Natural killer cell (primary cell): ENCODE measurements at regions of chr6 and their contacts with region 1.

Region 1: GRCh38 chr6:56359201-56359899 is 112.0 kb upstream of the COL21A1 start:
- DNase-seq: peak; percentile 18 to 73
- ATAC-seq: peak; percentile 71 to 85 (median 84)
- H3K4me3 ChIP-seq: no peak overlapping the region
- H3K4me3 Mint-ChIP-seq: no peak overlapping the region
- H3K27ac ChIP-seq: no peak overlapping the region
- H3K27ac Mint-ChIP-seq: no peak overlapping the region
- H3K4me1 ChIP-seq: no peaks in the 10 kb centered on the region
- H3K4me1 Mint-ChIP-seq: no peaks in the 10 kb centered on the region
- H3K27me3 ChIP-seq: no peaks in the 10 kb centered on the region
- H3K27me3 Mint-ChIP-seq: no peaks in the 10 kb centered on the region
- CTCF ChIP-seq: peak; percentile 80

Region 2: GRCh38 chr6:56570413-56571359 is 211.3 kb after region 1 on chr6:
- intact Hi-C with region 1: loop called (anchors 1 kb)
- DNase-seq: peak in 1 of 2 donors; percentile 33
- ATAC-seq: peak; percentile 24 to 49 (median 48)
- H3K4me3 ChIP-seq: no peak overlapping the region
- H3K4me3 Mint-ChIP-seq: no peak overlapping the region
- H3K27ac ChIP-seq: no peak overlapping the region
- H3K27ac Mint-ChIP-seq: no peak overlapping the region
- H3K4me1 ChIP-seq: no peaks in the 10 kb centered on the region
- H3K4me1 Mint-ChIP-seq: no peaks in the 10 kb centered on the region
- H3K27me3 ChIP-seq: no peaks in the 10 kb centered on the region
- H3K27me3 Mint-ChIP-seq: no peaks in the 10 kb centered on the region
- CTCF ChIP-seq: peak; percentile 33

Region 3: GRCh38 chr6:56595490-56596122 is 236.3 kb after region 1 on chr6:
- intact Hi-C with region 1: loop called (anchors 1 kb)
- DNase-seq: peak in 1 of 2 donors; percentile 63
- ATAC-seq: peak; percentile 57 to 75 (median 66)
- H3K4me3 ChIP-seq: no peak overlapping the region
- H3K4me3 Mint-ChIP-seq: no peak overlapping the region
- H3K27ac ChIP-seq: no peak overlapping the region
- H3K27ac Mint-ChIP-seq: no peak overlapping the region
- H3K4me1 ChIP-seq: no peaks in the 10 kb centered on the region
- H3K4me1 Mint-ChIP-seq: no peaks in the 10 kb centered on the region
- H3K27me3 ChIP-seq: no peaks in the 10 kb centered on the region
- H3K27me3 Mint-ChIP-seq: no peaks in the 10 kb centered on the region
- CTCF ChIP-seq: peak; percentile 56

Region 4: GRCh38 chr6:56851541-56852259 is 492.4 kb after region 1 on chr6:
- intact Hi-C with region 1: loop called (anchors 10 kb)
- DNase-seq: peak in 1 of 2 donors; percentile 44
- ATAC-seq: peak; percentile 71 to 92 (median 84)
- H3K4me3 ChIP-seq: peak overlapping the region; percentile 16
- H3K4me3 Mint-ChIP-seq: peak overlapping the region; percentile 86
- H3K27ac ChIP-seq: no peak overlapping the region
- H3K27ac Mint-ChIP-seq: peak overlapping the region in 1 of 2 donors; percentile 25
- H3K4me1 ChIP-seq: peaks cover 15% of the 10 kb centered on the region
- H3K4me1 Mint-ChIP-seq: peaks cover 27% of the 10 kb centered on the region in 2 donors
- H3K27me3 ChIP-seq: no peaks in the 10 kb centered on the region
- H3K27me3 Mint-ChIP-seq: peaks cover 18 to 35% of the 10 kb centered on the region in 2 donors
- CTCF ChIP-seq: peak; percentile 36